Activated CD8-positive, alpha-beta T cell treated with anti-CD3 and anti-CD28 coated beads for 36 hours (primary cell): ENCODE measurements at regions of chr15 and their contacts with region 1.

Region 1: GRCh38 chr15:91271565-91272153 is 171.6 kb downstream of the SV2B start:
- DNase-seq: peak; percentile 66
- ATAC-seq: peak; percentile 67
- H3K4me3 Mint-ChIP-seq: peak overlapping the region; percentile 13
- H3K27ac Mint-ChIP-seq: no peak overlapping the region
- H3K4me1 Mint-ChIP-seq: no peaks in the 10 kb centered on the region
- H3K27me3 Mint-ChIP-seq: peaks cover 20% of the 10 kb centered on the region
- CTCF ChIP-seq: peak; percentile 80

Region 2: DNA sequence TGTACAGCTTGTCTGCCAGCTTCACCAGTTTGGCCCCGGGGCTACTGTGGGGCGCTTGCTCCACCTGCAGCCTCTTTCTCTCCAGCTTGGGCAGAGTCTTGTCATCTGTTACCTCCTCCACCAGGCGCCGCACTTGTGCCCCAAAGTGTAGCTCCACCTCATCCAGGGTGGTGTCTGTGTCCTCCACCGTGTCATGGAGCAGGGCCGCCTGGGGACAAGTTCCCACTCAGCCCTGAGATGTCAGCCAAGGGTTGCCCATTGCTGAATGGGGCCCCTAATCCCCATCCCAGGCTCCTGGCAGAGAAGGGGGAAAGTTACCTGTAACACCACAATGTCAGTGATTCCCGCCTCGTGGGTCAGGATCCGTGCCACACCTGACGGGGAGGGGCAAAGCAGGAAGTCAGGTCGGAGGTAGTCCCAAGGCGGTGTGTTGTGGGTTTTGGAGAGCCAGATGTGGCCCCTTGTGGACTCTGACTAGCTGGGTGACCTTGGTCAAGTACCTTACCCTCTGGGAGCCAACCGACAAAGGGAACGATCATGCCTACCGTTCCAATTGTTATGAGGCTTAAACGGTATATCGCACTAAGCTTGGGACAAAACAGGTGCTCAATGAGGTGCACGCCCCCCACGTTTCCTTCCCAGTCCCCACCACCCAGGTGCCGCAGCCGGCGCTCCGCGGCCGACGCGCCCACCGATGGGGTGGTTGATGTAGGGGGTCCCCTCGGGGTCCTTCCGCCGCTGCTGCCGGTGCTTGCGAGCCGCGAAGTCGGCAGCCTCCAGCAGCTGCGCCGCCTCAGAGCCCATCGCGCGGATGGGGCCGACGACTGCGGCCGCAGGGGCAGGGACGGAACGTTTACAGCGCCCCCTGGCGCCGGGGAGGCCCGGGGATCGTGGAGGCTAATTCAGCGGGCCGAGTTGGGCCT is 339.7 kb before region 1 on chr15 and contains the start of gene HDDC3:
- CTCF ChIA-PET with region 1: interaction called, 10 read pairs
- POLR2A ChIA-PET with region 1: no interaction called
- intact Hi-C with region 1: no loop called
- DNase-seq: peak; percentile 94
- ATAC-seq: peak; percentile 60
- H3K4me3 Mint-ChIP-seq: peak within 1 kb of the TSS; percentile 99
- H3K27ac Mint-ChIP-seq: peak within 1 kb of the TSS; percentile 99
- H3K4me1 Mint-ChIP-seq: peaks cover 36% of the 10 kb centered on the region
- H3K27me3 Mint-ChIP-seq: no peaks in the 10 kb centered on the region
- CTCF ChIP-seq: peak; percentile 96
- total RNA-seq, gene HDDC3: 34.2 to 35.6 TPM

Region 3: GRCh38 chr15:91246998-91247397 is 24.7 kb before region 1 on chr15:
- CTCF ChIA-PET with region 1: interaction called, 25 read pairs
- POLR2A ChIA-PET with region 1: no interaction called
- intact Hi-C with region 1: no loop called
- DNase-seq: no peak
- ATAC-seq: no peak
- H3K4me3 Mint-ChIP-seq: no peak overlapping the region
- H3K27ac Mint-ChIP-seq: no peak overlapping the region
- H3K4me1 Mint-ChIP-seq: no peaks in the 10 kb centered on the region
- H3K27me3 Mint-ChIP-seq: peaks cover 3% of the 10 kb centered on the region
- CTCF ChIP-seq: no peak

Region 4: GRCh38 chr15:91258425-91258779 is 13.3 kb before region 1 on chr15:
- CTCF ChIA-PET with region 1: interaction called, 45 read pairs
- POLR2A ChIA-PET with region 1: interaction called, 3 read pairs
- intact Hi-C with region 1: no loop called
- DNase-seq: peak; percentile 22
- ATAC-seq: peak; percentile 49
- H3K4me3 Mint-ChIP-seq: no peak overlapping the region
- H3K27ac Mint-ChIP-seq: no peak overlapping the region
- H3K4me1 Mint-ChIP-seq: no peaks in the 10 kb centered on the region
- H3K27me3 Mint-ChIP-seq: peaks cover 17% of the 10 kb centered on the region
- CTCF ChIP-seq: no peak

Region 5: GRCh38 chr15:91282486-91282885 is 10.8 kb after region 1 on chr15:
- CTCF ChIA-PET with region 1: interaction called, 13 read pairs
- POLR2A ChIA-PET with region 1: no interaction called
- intact Hi-C with region 1: no loop called
- DNase-seq: no peak
- ATAC-seq: no peak
- H3K4me3 Mint-ChIP-seq: no peak overlapping the region
- H3K27ac Mint-ChIP-seq: no peak overlapping the region
- H3K4me1 Mint-ChIP-seq: no peaks in the 10 kb centered on the region
- H3K27me3 Mint-ChIP-seq: peaks cover 4% of the 10 kb centered on the region
- CTCF ChIP-seq: no peak

Region 6: GRCh38 chr15:91302588-91303439 is 31.2 kb after region 1 on chr15:
- CTCF ChIA-PET with region 1: interaction called, 14 read pairs
- POLR2A ChIA-PET with region 1: no interaction called
- intact Hi-C with region 1: no loop called
- DNase-seq: no peak
- ATAC-seq: peak; percentile 49
- H3K4me3 Mint-ChIP-seq: no peak overlapping the region
- H3K27ac Mint-ChIP-seq: no peak overlapping the region
- H3K4me1 Mint-ChIP-seq: peaks cover 3% of the 10 kb centered on the region
- H3K27me3 Mint-ChIP-seq: peaks cover 10% of the 10 kb centered on the region
- CTCF ChIP-seq: peak; percentile 87

Region 7: DNA sequence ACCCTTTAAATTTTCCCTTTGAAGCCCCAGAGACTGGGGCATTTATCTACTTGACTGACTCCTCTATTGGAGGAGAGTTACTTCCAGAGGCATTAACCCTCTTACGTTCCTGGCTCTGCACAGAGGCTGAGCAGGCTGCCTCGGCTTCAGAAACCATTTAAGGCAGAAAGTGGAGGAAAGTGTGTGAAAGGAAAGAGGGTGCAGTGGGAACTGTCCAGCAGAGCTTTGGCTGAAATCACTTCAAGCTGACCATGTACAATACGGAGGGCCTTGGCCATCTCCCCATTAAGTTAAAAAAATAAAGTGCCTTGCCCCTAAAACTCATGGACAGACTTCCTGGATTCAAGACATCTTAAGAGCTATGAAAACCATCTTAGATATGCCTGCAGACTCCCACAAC is 67.1 kb after region 1 on chr15:
- CTCF ChIA-PET with region 1: no interaction called
- POLR2A ChIA-PET with region 1: no interaction called
- intact Hi-C with region 1: no loop called
- DNase-seq: peak; percentile 26
- ATAC-seq: no peak
- H3K4me3 Mint-ChIP-seq: no peak overlapping the region
- H3K27ac Mint-ChIP-seq: no peak overlapping the region
- H3K4me1 Mint-ChIP-seq: peaks cover 10% of the 10 kb centered on the region
- H3K27me3 Mint-ChIP-seq: peaks cover 1% of the 10 kb centered on the region
- CTCF ChIP-seq: no peak